HEK293T (cell line): ENCODE measurements at regions of chr9 and their contacts with region 1.

Region 1: GRCh38 chr9:34072868-34073590 is 24.3 kb upstream of the UBAP2 start:
- DNase-seq: no peak

Region 2: DNA sequence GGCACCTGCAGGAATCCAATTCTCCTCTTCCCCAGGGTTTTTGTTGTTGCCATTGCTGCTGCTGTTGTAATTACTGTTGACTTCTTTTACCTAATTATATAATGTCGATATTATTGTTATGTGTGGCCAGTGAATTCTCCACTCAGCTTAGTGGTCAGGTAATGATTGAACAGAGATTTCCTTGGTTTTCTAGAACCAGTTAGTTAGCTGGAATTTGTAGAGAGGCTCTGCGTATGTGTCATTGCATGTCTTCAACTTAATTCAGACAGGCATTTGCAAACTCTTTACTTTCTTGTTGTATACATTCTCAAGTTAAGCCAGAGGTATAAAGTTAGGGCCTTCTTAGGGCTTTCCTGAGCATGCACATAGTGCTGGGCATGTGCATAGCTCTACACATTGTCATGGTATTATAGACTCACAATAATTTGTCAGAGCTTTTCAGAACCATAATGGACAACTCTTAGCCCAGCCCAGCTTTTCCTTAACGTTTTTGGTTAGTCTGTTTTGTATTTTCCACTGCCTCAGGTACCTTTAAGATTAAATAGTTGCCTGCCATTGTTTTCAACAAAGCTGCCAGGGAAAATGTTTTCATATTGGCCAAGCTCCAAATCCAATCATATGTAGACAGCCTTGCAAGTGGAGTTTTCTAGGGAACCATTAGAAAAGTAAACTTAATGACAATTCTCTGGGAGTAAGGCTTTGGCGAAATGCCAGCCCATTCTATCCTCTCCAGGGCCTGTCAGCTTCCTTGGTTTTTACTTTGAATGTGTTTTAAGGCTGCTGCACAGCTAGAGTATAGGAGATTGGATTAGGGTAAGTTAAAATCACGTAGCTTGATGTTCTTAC is 187.9 kb before region 1 on chr9:
- CTCF ChIA-PET with region 1: no interaction called
- POLR2A ChIA-PET with region 1: no interaction called
- DNase-seq: peak; percentile 17

Region 3: GRCh38 chr9:33924978-33925797 is 147.8 kb before region 1 on chr9:
- CTCF ChIA-PET with region 1: interaction called, 11 read pairs
- POLR2A ChIA-PET with region 1: no interaction called
- DNase-seq: peak; percentile 60

Region 4: DNA sequence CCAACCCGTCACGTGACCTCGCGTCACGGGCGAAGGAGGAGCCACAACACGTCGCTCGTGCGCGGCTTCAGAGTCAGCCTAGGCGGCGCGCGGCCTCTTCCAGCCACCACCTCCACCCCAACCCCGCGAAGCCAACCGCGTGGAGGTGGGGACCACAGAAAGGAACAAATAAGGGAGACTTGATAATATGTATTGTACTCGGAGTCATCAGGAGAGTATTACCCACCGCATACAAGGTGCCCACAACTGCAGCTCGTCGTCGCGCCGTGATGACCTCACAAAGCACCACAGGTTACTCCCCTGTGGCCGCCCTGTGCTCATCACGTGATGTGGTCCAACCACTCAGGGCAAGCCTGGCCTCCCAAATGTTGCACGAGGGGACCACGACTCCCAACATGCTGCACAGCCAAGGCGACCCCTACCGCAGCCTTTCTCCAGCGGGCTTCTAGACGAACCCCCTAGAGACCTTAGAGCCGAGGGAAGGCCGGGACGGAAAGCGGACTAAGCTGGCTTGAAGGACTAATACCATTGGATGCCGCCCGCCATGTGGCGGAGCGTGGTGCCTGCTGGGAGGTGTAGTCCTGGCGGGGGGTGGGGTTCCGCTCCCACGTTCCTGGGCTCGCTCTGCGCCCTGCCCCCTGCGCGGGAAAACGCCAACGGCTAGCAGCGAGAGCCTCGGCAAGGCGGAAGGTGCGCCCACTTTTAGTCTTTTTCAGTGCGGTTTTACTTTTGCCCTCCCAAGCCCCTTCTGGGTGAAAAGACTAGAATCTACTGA is 23.9 kb before region 1 on chr9:
- CTCF ChIA-PET with region 1: interaction called, 6 read pairs
- POLR2A ChIA-PET with region 1: interaction called, 22 read pairs
- DNase-seq: peak; percentile 91

Region 5: DNA sequence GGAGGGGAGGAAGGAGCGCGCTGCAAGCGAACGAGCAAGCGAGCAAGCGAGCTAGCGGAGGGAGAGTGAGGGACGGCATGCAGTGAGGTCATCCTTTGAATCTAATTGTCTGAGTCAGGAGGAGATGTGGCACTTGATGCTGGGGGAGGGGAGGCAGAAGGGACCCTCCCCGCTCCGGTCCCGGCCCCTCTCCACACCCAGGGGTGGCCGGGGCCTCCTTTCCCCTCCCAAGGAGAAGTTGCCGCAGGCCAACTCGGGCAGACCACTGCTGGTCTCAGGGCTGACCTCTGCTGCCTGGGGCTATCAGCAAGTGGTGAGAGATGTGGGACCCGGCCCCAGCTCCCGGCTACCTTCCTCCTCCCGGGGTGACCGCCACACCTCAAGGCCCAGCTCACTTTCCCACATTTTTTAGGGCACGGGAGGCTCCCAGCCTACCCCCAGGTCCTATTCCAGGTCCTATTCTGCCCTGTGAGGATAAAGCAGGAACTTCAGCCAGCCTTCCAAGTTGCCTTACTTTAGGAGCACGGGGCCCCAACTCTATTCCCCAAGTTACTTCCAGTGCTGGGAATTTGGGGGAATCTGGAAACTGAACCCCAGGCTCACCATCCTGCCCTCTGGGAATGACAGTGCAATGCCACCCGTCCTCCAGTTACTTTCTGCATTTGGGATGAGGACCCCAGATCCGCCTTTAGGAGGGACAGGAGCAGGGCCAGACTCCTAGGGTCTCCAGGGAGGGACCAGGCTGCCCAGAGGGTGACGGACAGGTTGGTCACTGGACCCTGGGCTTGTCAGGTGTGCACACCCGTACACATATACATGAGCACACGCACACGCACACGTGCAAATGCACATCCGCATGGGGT is 505.4 kb after region 1 on chr9:
- CTCF ChIA-PET with region 1: no interaction called
- POLR2A ChIA-PET with region 1: no interaction called
- DNase-seq: no peak